ENCODE measurements at regions of chr1 and their contacts with region 1.

Region 1: DNA sequence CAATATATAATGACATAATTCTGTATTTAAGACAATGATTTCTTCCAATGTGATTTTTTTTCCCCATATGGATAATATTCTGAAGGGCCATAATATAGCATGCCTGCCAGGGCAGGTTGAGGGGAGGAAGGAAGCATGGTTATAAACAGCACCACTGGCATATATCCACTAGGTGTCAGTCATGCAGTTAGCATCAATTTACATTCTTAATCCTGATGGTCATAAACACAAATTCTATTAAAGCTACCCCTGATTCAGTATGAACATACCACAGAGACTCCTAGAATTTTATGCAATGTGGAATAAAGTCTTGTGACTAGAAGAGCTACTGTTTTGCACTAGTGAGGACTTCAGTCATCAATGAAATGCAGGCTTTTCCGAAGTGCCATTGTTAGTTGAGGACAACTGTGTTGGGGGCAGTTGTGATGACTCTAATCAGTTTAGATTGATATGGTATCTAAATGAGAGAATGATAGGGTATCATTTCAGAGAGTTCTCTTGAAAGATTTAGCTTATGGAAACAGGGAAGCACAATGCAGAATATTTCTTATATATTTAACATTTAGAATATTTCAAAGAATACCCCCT is 342.7 kb upstream of the NR5A2 start:
- DNase-seq: no peak
- H3K4me3 ChIP-seq: no peak overlapping the region
- H3K27ac ChIP-seq: no peak overlapping the region
- H3K4me1 ChIP-seq: no peaks in the 10 kb centered on the region
- H3K27me3 ChIP-seq: peaks cover 0 to 4% (median 0%) of the 10 kb centered on the region in 7 donors
- CTCF ChIP-seq: peak; percentile 53 to 82 (median 73)
- POLR2A ChIP-seq: no peak

Region 2: DNA sequence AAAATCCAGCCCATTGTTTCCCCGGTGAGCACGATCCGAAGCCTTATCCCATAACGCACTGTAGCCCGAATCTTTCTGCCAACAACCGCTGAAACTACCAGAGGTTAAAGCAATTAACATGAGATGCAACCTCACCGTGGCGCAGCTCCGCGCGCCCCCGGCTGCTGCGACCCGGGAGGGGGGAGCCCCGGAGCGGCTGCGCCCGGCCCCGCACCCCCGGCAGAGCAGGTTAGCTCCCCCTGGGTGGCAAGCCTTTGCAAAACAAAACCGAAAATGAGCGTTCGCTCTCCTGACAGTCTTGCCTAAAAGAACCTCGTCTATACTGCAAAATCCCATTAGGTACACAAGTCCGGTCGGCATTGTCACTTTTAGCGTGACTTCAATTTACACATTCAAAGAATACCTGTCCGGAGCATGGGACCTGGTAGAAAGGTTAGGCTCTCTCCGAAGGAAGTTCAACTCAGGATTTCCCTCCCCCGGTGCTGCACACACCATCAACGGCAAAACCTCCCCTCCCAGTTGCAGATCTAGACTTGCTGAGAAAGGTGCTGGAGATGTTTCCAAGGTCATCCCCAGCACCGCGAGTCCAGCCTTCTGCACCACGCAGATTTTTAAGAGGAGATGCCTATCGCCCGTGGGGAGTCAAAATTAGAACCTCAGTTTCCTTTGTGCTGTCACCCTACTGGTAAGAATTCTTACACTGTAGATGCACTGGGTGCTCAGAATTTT is 617.6 kb after region 1 on chr1:
- intact Hi-C with region 1: loop called (anchors 10 kb)
- DNase-seq: peak; percentile 91
- H3K4me3 ChIP-seq: peak overlapping the region; percentile 42 to 88 (median 61)
- H3K27ac ChIP-seq: peak overlapping the region in 7 of 8 donors; percentile 12 to 80 (median 59)
- H3K4me1 ChIP-seq: peaks cover 3 to 64% (median 35%) of the 10 kb centered on the region in 6 donors
- H3K27me3 ChIP-seq: no peaks in the 10 kb centered on the region
- CTCF ChIP-seq: peak in 1 of 11 experiments; percentile 20
- POLR2A ChIP-seq: no peak

Region 3: GRCh38 chr1:200488375-200489165 is 803.8 kb after region 1 on chr1:
- intact Hi-C with region 1: loop called (anchors 5 kb)
- DNase-seq: no peak
- H3K4me3 ChIP-seq: no peak overlapping the region
- H3K27ac ChIP-seq: no peak overlapping the region
- H3K4me1 ChIP-seq: peaks cover 0 to 8% (median 2%) of the 10 kb centered on the region in 6 donors
- H3K27me3 ChIP-seq: peaks cover 0 to 10% (median 0%) of the 10 kb centered on the region in 7 donors
- CTCF ChIP-seq: peak; percentile 67 to 87 (median 81)
- POLR2A ChIP-seq: no peak

Measured in spleen (tissue), 13 donors.